Heart left ventricle (tissue), 16 donors: ENCODE measurements at regions of chr6 and their contacts with region 1.

Region 1: GRCh38 chr6:132530293-132530974 is 7.6 kb upstream of the TAAR9 start:
- DNase-seq: peak in 4 of 5 donors; percentile 26 to 58 (median 46)
- ATAC-seq: peak in 3 of 4 donors; percentile 44 to 72 (median 71)
- H3K4me3 ChIP-seq: no peak overlapping the region
- H3K27ac ChIP-seq: no peak overlapping the region
- H3K4me1 ChIP-seq: no peaks in the 10 kb centered on the region
- H3K27me3 ChIP-seq: peaks cover 0 to 10% (median 0%) of the 10 kb centered on the region in 9 donors
- CTCF ChIP-seq: peak; percentile 74 to 96 (median 86)
- POLR2A ChIP-seq: no peak

Region 2: DNA sequence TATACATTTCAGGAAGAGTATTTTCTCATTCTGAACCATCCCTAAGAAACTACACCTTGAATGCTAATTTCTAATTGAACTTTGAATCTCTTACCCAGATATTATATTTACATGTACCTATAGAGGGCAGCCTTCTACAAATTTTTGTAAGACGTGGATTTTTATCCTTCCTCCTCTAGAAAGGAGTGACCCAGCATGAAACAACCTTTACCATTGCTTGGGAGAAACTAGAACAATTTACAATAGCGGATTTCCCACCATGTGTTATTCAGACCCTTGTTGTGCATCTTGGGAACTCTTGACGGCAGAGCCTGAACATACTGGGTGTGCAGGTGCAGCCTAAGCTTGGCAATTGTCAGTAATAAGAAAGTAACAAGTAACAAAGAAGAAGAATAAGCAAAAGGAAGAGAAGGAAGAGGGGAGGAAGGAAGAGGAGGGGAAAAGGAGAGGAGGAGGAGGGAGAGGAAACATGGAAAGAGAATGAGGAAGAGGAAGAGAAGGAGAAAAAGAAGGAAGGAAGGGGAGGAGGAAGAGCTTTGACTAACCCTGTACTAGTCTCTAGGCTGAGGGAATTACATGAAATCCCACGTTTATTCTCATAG is 139.4 kb after region 1 on chr6:
- intact Hi-C with region 1: loop called in 2 of 10 experiments (anchors 2 to 10 kb)
- DNase-seq: no peak
- ATAC-seq: peak; percentile 37 to 73 (median 54)
- H3K4me3 ChIP-seq: no peak overlapping the region
- H3K27ac ChIP-seq: peak overlapping the region in 1 of 12 donors; percentile 42
- H3K4me1 ChIP-seq: peaks cover 0 to 4% (median 0%) of the 10 kb centered on the region in 12 donors
- H3K27me3 ChIP-seq: peaks cover 0 to 3% (median 0%) of the 10 kb centered on the region in 9 donors
- CTCF ChIP-seq: peak; percentile 26 to 70 (median 49)
- POLR2A ChIP-seq: no peak

Region 3: GRCh38 chr6:132768051-132768517 is 237.7 kb after region 1 on chr6:
- intact Hi-C with region 1: loop called in 5 of 10 experiments (anchors 2 to 10 kb)
- DNase-seq: peak; percentile 28 to 65 (median 32)
- ATAC-seq: peak; percentile 49 to 94 (median 88)
- H3K4me3 ChIP-seq: peak overlapping the region in 1 of 12 donors; percentile 30
- H3K27ac ChIP-seq: no peak overlapping the region
- H3K4me1 ChIP-seq: peaks cover 0 to 8% (median 0%) of the 10 kb centered on the region in 12 donors
- H3K27me3 ChIP-seq: no peaks in the 10 kb centered on the region
- CTCF ChIP-seq: peak; percentile 19 to 64 (median 46)
- POLR2A ChIP-seq: no peak

Region 4: DNA sequence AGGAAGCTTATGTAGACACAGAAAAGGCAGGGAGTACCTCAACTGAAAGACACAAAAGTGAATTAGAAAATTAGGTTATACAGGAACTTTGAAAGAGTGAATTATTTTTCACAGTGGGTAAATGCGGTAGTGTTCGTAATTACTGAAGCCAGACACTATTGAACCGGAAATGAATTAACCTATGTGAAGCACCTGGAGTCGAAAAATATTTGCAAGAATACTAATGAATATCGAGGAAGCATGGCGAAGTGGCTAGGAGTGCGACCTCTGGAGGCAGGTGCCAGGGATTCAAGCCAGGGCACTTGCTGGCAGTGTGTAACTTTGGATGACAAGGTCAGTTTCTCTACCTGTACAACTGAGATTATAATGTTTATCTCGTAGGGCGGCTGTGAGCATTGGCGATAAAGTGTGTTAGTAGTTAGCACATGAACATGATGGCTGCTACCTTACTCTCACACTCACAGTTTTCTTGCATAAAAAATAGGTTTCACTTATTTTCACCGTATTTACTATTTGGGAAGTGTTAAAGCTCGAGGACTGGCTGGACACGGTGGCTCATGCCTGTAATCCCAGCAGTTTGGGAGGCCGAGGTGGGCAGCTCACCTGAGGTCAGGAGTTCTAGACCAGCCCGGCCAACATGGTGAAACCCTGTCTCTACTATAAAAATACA is 268.6 kb after region 1 on chr6:
- intact Hi-C with region 1: loop called in 2 of 10 experiments (anchors 10 kb)
- DNase-seq: peak; percentile 64 to 77 (median 73)
- ATAC-seq: peak; percentile 79 to 94 (median 88)
- H3K4me3 ChIP-seq: peak overlapping the region in 11 of 12 donors; percentile 36 to 92 (median 72)
- H3K27ac ChIP-seq: peak overlapping the region in 8 of 12 donors; percentile 47 to 87 (median 72)
- H3K4me1 ChIP-seq: peaks cover 0 to 9% (median 1%) of the 10 kb centered on the region in 12 donors
- H3K27me3 ChIP-seq: no peaks in the 10 kb centered on the region
- CTCF ChIP-seq: peak; percentile 50 to 86 (median 73)
- POLR2A ChIP-seq: no peak